ENCODE measurements at regions of chr16 and their contacts with region 1.

Region 1: DNA sequence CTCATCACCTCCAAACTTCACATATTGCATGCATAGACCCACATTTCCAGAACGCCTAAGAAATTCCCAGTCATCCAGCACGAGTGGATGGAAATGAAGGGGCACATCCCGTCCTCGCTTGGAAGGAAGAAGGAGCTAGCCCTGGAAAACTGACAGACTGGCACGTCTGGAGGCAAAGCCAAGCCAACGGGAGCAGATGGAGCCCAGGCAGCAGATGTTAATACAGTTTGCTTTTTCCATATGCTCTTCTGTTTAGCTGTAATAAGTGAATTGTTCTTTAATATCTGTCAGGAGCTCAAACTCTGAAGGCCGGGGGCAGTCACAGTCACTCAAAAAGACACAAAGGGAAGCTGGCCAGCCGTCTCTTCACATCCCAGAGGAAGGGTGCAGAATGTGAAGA is 187.7 kb downstream of the XYLT1 start:
- DNase-seq: no peak
- CTCF ChIP-seq: no peak

Region 2: GRCh38 chr16:17295948-17296347 is 12.9 kb after region 1 on chr16:
- CTCF ChIA-PET with region 1: interaction called, 30 read pairs
- POLR2A ChIA-PET with region 1: no interaction called
- DNase-seq: no peak
- CTCF ChIP-seq: no peak

Region 3: GRCh38 chr16:17301593-17302135 is 18.6 kb after region 1 on chr16:
- CTCF ChIA-PET with region 1: interaction called, 30 read pairs
- POLR2A ChIA-PET with region 1: interaction called, 3 read pairs
- DNase-seq: peak; percentile 72
- CTCF ChIP-seq: no peak